Breast epithelium (tissue), 4 donors: ENCODE measurements at regions of chr3 and their contacts with region 1.

Region 1: GRCh38 chr3:31862666-31863279 is 118.3 kb downstream of the OSBPL10 start:
- DNase-seq: no peak
- H3K4me3 ChIP-seq: no peak overlapping the region
- H3K27ac ChIP-seq: no peak overlapping the region
- H3K4me1 ChIP-seq: no peaks in the 10 kb centered on the region
- H3K27me3 ChIP-seq: no peaks in the 10 kb centered on the region
- CTCF ChIP-seq: no peak
- POLR2A ChIP-seq: no peak

Region 2: GRCh38 chr3:31185062-31185357 is 677.8 kb before region 1 on chr3:
- intact Hi-C with region 1: no loop called
- DNase-seq: no peak
- H3K4me3 ChIP-seq: no peak overlapping the region
- H3K27ac ChIP-seq: no peak overlapping the region
- H3K4me1 ChIP-seq: no peaks in the 10 kb centered on the region
- H3K27me3 ChIP-seq: no peaks in the 10 kb centered on the region
- CTCF ChIP-seq: no peak
- POLR2A ChIP-seq: no peak

Region 3: GRCh38 chr3:31831598-31831997 is 31.2 kb before region 1 on chr3:
- intact Hi-C with region 1: no loop called
- DNase-seq: no peak
- H3K4me3 ChIP-seq: no peak overlapping the region
- H3K27ac ChIP-seq: no peak overlapping the region
- H3K4me1 ChIP-seq: no peaks in the 10 kb centered on the region
- H3K27me3 ChIP-seq: no peaks in the 10 kb centered on the region
- CTCF ChIP-seq: no peak
- POLR2A ChIP-seq: no peak

Region 4: DNA sequence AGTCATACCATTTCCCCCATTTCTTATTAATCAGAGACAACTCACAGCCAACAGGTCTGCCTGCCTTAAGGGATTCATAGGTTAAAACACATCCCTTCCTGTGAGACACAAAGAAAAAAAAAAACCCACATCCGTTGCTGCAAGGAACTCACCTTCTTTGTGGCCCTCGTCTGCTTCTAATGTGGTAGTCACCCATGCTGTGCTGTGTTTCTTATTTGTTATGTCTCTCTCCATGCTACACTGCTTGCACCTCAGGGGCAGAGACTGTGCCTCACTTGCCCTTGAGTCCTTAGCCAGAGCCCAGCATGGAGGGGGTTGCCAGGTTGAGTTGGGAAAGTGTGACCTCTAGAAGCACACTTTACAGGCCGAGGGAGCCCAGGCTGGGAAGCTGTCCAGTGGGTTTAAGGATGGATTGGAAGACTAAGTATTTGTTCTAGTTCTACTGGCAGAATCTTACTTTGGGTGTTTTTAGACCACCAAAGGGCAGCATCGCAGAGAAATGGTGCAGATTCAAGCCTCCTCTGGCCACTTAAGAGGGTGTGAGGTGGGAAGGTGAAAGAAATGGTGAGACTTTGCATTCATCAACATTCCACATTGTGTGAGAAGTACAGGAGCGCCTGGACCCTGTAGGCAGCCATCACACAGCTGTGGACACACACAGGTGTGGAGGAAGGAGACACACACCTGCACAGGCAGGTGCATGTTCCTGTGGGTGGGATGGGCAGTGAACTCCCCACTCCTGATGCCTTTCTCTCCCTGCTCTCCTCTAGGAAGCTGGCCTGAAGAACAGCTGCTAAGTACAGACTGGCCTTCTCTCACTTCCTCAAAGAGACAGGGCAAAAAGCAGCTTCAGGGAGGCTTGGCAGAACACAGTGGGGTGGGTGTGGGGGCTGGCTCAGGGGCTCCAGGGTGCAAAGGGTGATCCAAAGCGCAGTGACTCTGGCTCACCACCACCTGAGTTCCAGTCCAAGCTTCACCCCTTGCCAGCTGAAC is 1185.4 kb after region 1 on chr3:
- intact Hi-C with region 1: loop called (anchors 10 kb)
- DNase-seq: no peak
- H3K4me3 ChIP-seq: no peak overlapping the region
- H3K27ac ChIP-seq: no peak overlapping the region
- H3K4me1 ChIP-seq: no peaks in the 10 kb centered on the region
- H3K27me3 ChIP-seq: no peaks in the 10 kb centered on the region
- CTCF ChIP-seq: no peak
- POLR2A ChIP-seq: no peak